Heart right ventricle (tissue), 16 donors: ENCODE measurements at regions of chr7 and their contacts with region 1.

Region 1: DNA sequence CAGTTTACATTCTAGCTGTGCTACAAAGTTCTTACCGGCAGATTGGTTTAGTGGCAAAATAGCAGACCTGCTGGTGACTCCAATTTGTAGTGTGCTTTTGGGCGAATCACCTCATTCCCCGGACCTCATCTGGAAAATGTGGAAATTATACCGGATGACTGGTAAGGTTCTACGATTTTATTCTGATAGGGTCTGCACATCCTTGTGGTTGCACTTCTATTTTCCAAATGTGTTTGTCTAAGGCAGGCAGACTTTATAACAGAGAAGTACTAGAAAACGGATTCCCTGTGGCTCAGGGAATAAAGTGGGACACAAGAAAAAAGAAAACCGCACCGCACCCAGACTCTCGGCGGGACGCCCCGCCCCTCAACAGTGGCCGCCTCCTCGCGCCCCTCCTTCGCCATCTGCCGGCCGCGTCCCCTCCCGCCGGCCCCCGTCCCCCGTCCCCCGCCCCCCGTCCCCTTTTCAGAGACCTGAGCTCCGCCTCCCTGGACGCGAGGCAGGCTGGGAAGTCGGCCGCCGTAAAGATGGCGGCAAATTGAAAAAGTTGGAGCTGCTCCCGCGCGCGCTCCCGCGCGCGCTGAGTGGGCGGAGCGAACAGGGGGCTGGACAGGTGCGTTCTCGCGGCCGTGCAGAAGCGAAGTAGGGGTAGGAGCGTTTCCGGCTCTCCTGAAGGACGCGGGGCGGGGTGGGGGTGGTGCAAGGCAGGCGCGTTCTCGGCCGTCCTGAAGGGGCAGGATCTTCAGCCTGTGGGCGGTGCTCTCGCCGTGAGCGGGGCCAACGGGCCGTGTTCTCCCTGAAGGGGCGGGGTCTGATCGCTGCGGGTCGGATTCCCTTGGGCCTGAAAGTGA is 531 bp upstream of the CCM2 start:
- DNase-seq: peak; percentile 99 to 100
- ATAC-seq: peak; percentile 95 to 98 (median 97)
- H3K4me3 ChIP-seq: peak overlapping the region; percentile 27 to 82 (median 68)
- H3K27ac ChIP-seq: peak overlapping the region; percentile 14 to 96 (median 92)
- H3K4me1 ChIP-seq: peaks cover 0 to 48% (median 20%) of the 10 kb centered on the region in 9 donors
- H3K27me3 ChIP-seq: no peaks in the 10 kb centered on the region
- CTCF ChIP-seq: peak in 6 of 9 donors; percentile 6 to 42 (median 20)

Region 2: GRCh38 chr7:45052011-45052410 is 52.5 kb after region 1 on chr7:
- intact Hi-C with region 1: loop called in 1 of 10 experiments (anchors 10 kb)
- DNase-seq: no peak
- ATAC-seq: peak in 1 of 8 donors; percentile 47
- H3K4me3 ChIP-seq: no peak overlapping the region
- H3K27ac ChIP-seq: no peak overlapping the region
- H3K4me1 ChIP-seq: no peaks in the 10 kb centered on the region
- H3K27me3 ChIP-seq: no peaks in the 10 kb centered on the region
- CTCF ChIP-seq: no peak